ENCODE measurements at regions of chr17 and their contacts with region 1.

Region 1: GRCh38 chr17:42517516-42517915 is 18.5 kb upstream of the NAGLU start:
- DNase-seq: peak; percentile 95
- H3K4me3 Mint-ChIP-seq: no peak overlapping the region
- H3K27ac Mint-ChIP-seq: no peak overlapping the region
- H3K4me1 Mint-ChIP-seq: peaks cover 5% of the 10 kb centered on the region
- H3K27me3 Mint-ChIP-seq: no peaks in the 10 kb centered on the region

Region 2: DNA sequence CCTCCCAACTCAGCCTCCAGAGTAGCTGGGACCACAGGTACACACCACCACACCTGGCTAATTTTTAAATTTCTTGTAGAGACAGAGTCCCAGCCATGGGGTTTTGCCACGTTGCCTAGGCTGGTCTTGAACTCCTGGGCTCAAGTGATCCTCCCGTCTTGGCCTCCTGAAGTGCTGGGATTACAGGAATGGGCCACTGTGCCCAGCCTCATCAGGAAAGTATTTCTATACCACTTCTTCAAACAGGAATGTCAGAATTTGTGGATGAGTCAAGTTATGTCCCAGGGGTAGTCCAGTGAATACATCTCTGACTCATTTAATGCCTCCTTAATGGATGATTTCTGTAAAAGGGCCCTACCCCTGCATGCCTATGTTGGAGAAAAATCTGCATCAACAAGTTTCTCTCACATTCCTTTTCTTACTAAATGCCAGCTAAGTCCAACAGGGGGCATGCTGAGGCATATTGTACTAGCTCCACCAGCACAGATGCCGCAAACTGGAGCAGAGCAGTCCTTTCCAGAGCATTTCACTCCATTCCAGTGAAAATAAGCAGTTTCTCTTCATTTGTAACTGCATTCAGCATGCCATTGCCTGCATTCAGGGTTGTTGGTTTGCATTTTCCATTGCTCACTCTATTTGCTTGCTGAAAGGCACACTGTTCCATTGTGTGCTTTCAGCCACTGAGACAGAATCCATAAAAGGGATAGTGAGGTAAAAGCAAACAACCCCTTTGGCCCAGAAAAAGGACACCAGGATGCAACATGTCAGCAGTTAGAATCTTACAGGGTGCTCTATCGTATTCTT is 89.2 kb before region 1 on chr17:
- intact Hi-C with region 1: loop called (anchors 1 kb)
- DNase-seq: peak; percentile 82
- H3K4me3 Mint-ChIP-seq: no peak overlapping the region
- H3K27ac Mint-ChIP-seq: no peak overlapping the region
- H3K4me1 Mint-ChIP-seq: peaks cover under 1% of the 10 kb centered on the region
- H3K27me3 Mint-ChIP-seq: peaks cover 43% of the 10 kb centered on the region

Region 3: GRCh38 chr17:42438600-42439567 is 78.6 kb before region 1 on chr17:
- intact Hi-C with region 1: loop called (anchors 1 kb)
- DNase-seq: peak; percentile 84
- H3K4me3 Mint-ChIP-seq: no peak overlapping the region
- H3K27ac Mint-ChIP-seq: no peak overlapping the region
- H3K4me1 Mint-ChIP-seq: peaks cover 6% of the 10 kb centered on the region
- H3K27me3 Mint-ChIP-seq: peaks cover 20% of the 10 kb centered on the region

Region 4: DNA sequence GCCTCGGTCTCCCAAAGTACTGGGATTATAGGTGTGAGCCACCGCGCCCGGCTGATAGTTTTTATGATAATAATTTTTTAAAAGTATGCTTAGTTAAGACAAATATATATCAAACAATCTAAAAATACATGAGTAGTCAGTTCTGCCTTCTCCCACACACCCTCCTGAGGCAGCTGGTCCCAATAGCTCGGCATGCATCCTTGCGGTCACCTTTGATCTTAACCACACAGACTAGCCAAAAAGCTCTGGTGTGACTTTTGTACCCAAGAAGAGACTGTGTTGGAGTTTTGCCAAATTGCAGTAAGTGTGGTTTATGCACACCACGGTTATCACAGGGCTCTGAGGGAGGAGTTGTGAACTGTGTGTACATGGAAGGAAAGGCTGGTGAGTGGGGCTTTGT is 33.2 kb before region 1 on chr17:
- intact Hi-C with region 1: no loop called
- DNase-seq: peak; percentile 93
- H3K4me3 Mint-ChIP-seq: peak overlapping the region; percentile 51
- H3K27ac Mint-ChIP-seq: peak overlapping the region; percentile 52
- H3K4me1 Mint-ChIP-seq: peaks cover 16% of the 10 kb centered on the region
- H3K27me3 Mint-ChIP-seq: peaks cover 3% of the 10 kb centered on the region

Region 5: GRCh38 chr17:42591411-42591810 is 73.9 kb after region 1 on chr17:
- intact Hi-C with region 1: no loop called
- DNase-seq: no peak
- H3K4me3 Mint-ChIP-seq: no peak overlapping the region
- H3K27ac Mint-ChIP-seq: no peak overlapping the region
- H3K4me1 Mint-ChIP-seq: peaks cover 6% of the 10 kb centered on the region
- H3K27me3 Mint-ChIP-seq: no peaks in the 10 kb centered on the region

Measured in activated CD4-positive, alpha-beta T cell treated with anti-CD3 and anti-CD28 coated beads, Interleukin-2, amount 10 ng/mL, durations not matched to agents 24 days and 14 days (primary cell).